Astrocyte of the cerebellum (primary cell): ENCODE measurements at regions of chr4 and their contacts with region 1.

Region 1: DNA sequence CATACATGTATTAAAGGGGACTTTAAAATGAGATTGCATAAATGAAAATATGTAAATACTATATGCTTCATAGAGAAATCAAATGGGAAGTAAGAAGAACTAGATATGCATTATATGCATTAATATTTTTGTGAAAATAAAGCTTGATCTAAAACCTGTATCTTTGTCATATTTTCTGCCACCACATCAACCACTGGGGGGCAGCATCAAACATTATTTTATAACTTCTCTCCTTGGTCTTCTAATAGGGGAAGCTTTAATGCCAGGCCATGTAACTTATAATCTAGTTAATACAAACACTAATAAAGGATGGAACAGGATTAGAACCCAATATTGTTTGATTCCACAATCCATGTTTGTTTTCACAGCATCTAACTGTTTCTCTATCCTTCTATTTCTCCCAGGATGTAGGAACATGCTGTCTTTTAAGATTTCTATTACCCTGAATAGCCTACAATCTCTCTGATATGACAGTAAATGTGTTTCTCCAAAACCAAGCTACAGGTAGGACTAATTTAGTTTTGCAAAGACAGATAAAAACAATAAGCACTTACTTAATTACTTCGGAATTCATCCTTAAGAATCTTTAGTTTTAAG is 10.0 kb downstream of the QRFPR start:
- DNase-seq: peak; percentile 43
- H3K4me3 ChIP-seq: no peak overlapping the region
- CTCF ChIP-seq: peak; percentile 55

Region 2: DNA sequence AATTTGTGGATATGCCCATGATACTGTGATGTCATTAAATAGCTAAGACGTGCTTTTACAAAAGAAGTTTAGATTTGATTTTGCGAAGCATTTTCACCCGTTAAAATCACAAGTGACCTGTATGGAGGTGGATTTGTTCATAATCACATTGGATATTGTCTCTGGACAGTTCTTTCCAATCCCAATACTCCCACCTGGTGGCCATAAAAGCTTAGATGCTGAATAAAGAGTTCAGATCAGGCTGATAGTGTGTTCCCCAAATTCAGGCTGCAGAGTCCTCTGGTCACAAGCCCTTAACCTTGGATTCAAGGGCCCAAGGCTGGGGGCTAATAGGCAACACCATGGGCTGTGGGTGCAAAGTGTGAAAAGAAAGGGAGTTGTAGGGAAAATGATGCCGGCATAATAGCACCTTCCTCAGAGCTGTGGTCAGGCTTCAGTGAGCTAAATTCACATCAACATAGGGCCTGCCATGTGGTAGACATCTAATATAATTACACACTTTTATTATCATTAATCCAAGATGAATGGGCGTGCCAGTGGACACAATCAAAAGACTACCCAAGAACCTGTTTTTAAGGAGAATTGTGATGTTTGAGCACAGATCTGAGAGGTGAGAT is 366.0 kb after region 1 on chr4:
- in situ Hi-C with region 1: loop called (anchors 5 kb)
- DNase-seq: peak; percentile 60
- H3K4me3 ChIP-seq: no peak overlapping the region
- CTCF ChIP-seq: peak; percentile 63